Activated naive CD8-positive, alpha-beta T cell treated with anti-CD3 and anti-CD28 coated beads, Interleukin-2, amount 10 ng/mL, durations not matched to agents 7 days and 5 days (primary cell): ENCODE measurements at regions of chr1 and their contacts with region 1.

Region 1: GRCh38 chr1:161201828-161202725 is at the start of gene NDUFS2:
- DNase-seq: peak; percentile 86
- ATAC-seq: peak; percentile 99
- H3K4me3 Mint-ChIP-seq: peak within 1 kb of the TSS; percentile 96
- H3K27ac Mint-ChIP-seq: peak within 1 kb of the TSS; percentile 97
- H3K4me1 Mint-ChIP-seq: peaks cover 61% of the 10 kb centered on the region
- H3K27me3 Mint-ChIP-seq: no peaks in the 10 kb centered on the region
- total RNA-seq, gene NDUFS2: 80.6 to 92.8 TPM

Region 2: GRCh38 chr1:161177112-161177935 is 24.8 kb before region 1 on chr1 and contains the start of gene B4GALT3:
- POLR2A ChIA-PET with region 1: interaction called, 53 read pairs
- DNase-seq: peak; percentile 100
- ATAC-seq: peak; percentile 86
- H3K4me3 Mint-ChIP-seq: peak within 1 kb of the TSS; percentile 99
- H3K27ac Mint-ChIP-seq: peak within 1 kb of the TSS; percentile 98
- H3K4me1 Mint-ChIP-seq: peaks cover 49% of the 10 kb centered on the region
- H3K27me3 Mint-ChIP-seq: no peaks in the 10 kb centered on the region
- total RNA-seq, gene B4GALT3: 54.5 to 54.8 TPM

Region 3: GRCh38 chr1:161215076-161215475 is 13.0 kb after region 1 on chr1 and contains the start of gene FCER1G:
- POLR2A ChIA-PET with region 1: interaction called, 17 read pairs
- DNase-seq: no peak
- ATAC-seq: peak; percentile 13
- H3K4me3 Mint-ChIP-seq: peak within 1 kb of the TSS; percentile 90
- H3K27ac Mint-ChIP-seq: peak within 1 kb of the TSS; percentile 92
- H3K4me1 Mint-ChIP-seq: peaks cover 47% of the 10 kb centered on the region
- H3K27me3 Mint-ChIP-seq: no peaks in the 10 kb centered on the region
- total RNA-seq, gene FCER1G: 18.9 to 22.1 TPM

Region 4: DNA sequence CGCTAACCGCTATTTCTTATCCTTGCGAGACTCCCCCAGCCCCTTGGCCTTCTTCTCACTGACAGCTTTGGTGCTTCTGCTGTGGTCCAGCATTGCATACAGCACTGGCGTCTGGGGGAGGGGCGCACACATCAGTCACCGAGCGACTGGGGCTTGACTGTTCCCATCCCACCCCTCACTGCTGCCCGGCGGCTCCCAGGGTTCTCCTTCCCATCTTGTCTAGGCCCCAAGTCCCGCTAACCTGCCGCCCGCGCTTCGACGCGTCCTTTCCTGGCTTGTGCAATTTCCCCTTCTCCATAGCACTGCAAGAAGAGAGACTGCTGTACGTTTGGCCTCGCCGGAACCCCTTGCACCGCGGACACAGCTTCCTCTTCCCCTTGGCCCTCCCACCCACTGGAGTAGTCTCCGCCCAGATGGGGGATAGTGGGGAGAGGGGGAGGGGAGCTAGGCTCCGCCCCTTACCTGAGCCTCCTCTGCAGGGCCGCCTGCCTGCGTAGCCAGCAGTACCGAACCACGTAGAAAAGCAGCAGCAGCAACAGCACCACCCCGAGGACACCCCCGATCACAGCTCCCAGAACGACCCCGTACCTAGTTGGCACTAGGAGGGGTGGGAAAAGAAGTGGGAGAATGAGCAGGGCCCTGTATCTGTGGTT is 103.9 kb after region 1 on chr1:
- POLR2A ChIA-PET with region 1: interaction called, 11 read pairs
- DNase-seq: peak; percentile 87
- ATAC-seq: peak; percentile 91
- H3K4me3 Mint-ChIP-seq: peak overlapping the region; percentile 99
- H3K27ac Mint-ChIP-seq: peak overlapping the region; percentile 99
- H3K4me1 Mint-ChIP-seq: peaks cover 28% of the 10 kb centered on the region
- H3K27me3 Mint-ChIP-seq: no peaks in the 10 kb centered on the region

Region 5: DNA sequence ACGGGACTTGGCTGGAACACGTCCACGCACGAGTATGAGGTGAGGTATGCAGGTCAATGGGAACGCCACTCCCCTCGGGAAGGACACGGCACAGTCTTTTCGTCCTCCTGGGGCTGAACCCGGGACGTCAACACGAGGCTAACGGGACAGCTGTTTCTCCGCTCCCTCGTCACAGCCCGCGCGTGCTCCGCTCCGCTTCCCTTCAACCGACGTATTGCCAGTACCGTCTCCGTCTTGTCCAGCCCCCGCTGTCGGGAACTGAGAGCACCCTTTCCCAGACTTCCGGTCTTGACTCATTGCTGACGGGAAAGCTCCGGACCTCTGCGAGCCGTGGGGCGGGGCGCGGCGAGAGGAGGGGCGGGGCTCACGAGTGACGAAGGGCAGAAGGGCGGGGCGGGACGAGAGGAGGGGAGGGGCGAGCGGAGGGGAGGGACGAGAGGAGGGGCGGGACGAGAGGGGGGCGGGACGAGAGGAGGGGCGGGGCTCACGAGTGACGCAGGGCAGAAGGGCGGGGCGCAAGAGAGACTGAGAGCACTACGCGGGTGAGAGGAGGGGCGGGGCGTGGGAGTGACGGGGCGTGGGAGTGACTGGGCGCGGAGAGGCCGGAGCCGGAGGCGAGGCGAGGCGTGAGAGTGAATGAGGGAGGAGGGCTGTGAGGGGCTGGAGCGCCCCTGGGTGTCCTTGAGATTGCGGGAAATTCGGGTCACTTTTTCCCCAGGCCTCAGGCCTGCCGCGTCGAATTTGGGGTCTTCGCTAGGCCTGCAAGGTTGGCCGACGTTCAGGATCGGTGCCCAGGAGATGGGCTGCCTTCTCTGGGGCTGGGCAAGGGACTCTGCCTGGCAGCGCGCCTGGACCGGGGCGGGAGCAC is 187.8 kb after region 1 on chr1:
- POLR2A ChIA-PET with region 1: interaction called, 10 read pairs
- DNase-seq: peak; percentile 94
- ATAC-seq: peak; percentile 92
- H3K4me3 Mint-ChIP-seq: peak overlapping the region; percentile 96
- H3K27ac Mint-ChIP-seq: peak overlapping the region; percentile 98
- H3K4me1 Mint-ChIP-seq: peaks cover 41% of the 10 kb centered on the region
- H3K27me3 Mint-ChIP-seq: no peaks in the 10 kb centered on the region